Mammary epithelial cell (primary cell): ENCODE measurements at regions of chr6 and their contacts with region 1.

Region 1: GRCh38 chr6:10747251-10747972 is at the start of gene TMEM14B:
- DNase-seq: peak; percentile 95
- H3K4me3 ChIP-seq: peak within 1 kb of the TSS; percentile 82 to 99 (median 84)
- H3K27ac ChIP-seq: peak within 1 kb of the TSS; percentile 86
- H3K4me1 ChIP-seq: peaks cover 14% of the 10 kb centered on the region
- H3K27me3 ChIP-seq: no peaks in the 10 kb centered on the region
- CTCF ChIP-seq: no peak
- total RNA-seq, gene TMEM14B: 39.3 to 63.5 TPM

Region 2: DNA sequence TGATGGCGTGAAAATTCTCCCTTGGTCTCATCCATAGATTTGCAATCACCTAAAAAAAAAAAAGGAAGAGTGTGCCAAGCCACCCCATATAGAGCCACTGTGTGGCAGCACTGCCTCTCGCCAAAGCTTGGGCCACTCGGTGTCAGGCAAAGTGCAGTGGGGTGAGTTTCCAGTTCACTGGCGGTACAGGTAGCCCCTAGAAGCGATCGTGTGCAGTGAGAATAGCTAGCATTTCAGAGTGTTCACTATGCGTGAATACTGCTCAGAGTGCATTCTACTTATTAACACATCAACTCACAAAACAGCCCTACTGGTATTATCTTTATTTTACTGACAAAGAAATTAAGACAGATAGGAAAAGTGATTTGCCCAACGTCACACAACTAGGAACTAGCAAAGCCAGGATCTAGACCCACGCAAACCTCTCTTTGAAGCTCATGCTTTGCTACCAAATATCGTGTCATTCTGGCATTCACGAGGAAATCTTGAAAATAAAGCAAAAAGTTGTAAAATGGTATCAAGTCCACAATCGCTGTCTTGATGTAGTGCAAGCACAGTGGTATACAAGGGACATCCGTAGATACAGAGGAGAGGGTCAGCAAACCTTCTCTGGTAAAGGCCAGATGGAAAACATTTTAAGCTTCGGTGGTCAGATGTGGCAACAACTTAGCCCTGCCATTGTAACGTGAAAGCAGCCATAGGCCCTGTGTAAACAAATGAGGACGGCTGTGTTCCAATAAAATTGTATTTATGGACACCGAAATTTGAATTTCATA is 236.6 kb before region 1 on chr6:
- CTCF ChIA-PET with region 1: no interaction called
- dilution Hi-C with region 1: no loop called
- in situ Hi-C with region 1: no loop called
- intact Hi-C with region 1: loop called (anchors 1 kb)
- DNase-seq: peak; percentile 27
- H3K4me3 ChIP-seq: no peak overlapping the region
- H3K27ac ChIP-seq: no peak overlapping the region
- H3K4me1 ChIP-seq: no peaks in the 10 kb centered on the region
- H3K27me3 ChIP-seq: no peaks in the 10 kb centered on the region
- CTCF ChIP-seq: peak; percentile 84 to 86

Region 3: GRCh38 chr6:10759312-10759839 is 12.0 kb after region 1 on chr6:
- CTCF ChIA-PET with region 1: no interaction called
- dilution Hi-C with region 1: no loop called
- in situ Hi-C with region 1: no loop called
- intact Hi-C with region 1: loop called (anchors 1 kb)
- DNase-seq: peak; percentile 96
- H3K4me3 ChIP-seq: no peak overlapping the region
- H3K27ac ChIP-seq: peak overlapping the region; percentile 84
- H3K4me1 ChIP-seq: peaks cover 21% of the 10 kb centered on the region
- H3K27me3 ChIP-seq: no peaks in the 10 kb centered on the region
- CTCF ChIP-seq: peak; percentile 58 to 67

Region 4: DNA sequence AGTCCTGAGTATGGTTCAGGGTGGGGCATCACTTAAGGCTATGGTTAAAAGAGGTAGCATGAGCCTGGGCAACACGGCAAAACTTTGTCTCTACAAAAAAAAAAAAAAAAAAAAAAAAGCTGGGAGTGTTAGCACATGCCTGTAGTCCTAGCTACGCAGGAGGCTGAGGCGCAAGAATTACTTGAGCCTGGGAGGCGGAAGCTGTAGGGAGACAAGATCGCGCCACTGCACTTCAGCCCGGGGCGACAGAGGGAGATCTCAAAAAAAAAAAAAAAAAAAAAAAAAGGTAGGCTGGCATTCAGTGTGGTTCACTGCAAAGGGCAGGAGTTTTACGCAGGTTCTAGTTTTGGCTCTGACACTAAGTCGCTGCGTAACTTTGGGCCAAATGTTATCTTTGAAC is 281.6 kb after region 1 on chr6:
- CTCF ChIA-PET with region 1: interaction called, 10 read pairs
- dilution Hi-C with region 1: no loop called
- in situ Hi-C with region 1: no loop called
- intact Hi-C with region 1: no loop called
- DNase-seq: no peak
- H3K4me3 ChIP-seq: no peak overlapping the region
- H3K27ac ChIP-seq: no peak overlapping the region
- H3K4me1 ChIP-seq: no peaks in the 10 kb centered on the region
- H3K27me3 ChIP-seq: peaks cover 3% of the 10 kb centered on the region
- CTCF ChIP-seq: no peak

Region 5: DNA sequence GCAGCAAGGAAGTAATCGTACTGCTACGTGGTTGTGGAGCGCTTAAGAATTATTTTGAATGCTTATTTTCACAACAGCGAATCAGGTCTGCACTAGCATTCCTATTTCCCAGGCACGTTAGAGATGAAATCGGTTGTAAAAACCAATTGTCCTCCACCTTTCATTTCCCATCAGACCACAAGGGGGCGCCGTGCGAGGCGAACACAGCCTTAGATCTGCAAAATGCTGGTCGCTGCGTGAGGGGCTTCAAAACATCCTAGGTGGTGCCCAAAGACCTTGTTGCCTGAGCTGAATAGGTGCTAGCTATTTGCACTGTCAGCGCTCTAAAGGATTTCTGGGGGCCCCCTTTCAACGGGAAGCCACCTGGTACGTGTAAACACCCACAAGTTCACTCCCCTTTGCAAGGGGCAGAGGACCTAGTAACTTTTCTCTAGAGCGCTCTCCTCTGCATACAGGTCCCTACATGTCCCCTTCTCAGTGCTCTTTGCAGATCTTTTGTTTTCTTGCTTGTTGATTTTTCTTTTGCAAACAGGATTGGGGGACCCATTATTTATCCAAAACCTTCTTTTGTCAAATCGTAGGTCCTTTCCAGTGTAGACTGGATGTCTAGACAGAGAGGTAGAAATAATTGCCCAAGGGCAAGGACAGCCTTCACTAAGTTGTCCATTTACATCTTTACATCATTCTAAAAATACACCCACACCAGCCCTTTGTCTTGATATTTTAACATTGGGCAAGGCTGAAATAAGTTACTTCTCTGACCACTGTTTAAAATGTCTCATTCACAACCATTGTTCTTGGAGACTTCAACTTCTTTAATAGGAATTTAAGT is 425.3 kb after region 1 on chr6:
- CTCF ChIA-PET with region 1: no interaction called
- dilution Hi-C with region 1: no loop called
- in situ Hi-C with region 1: no loop called
- intact Hi-C with region 1: no loop called
- DNase-seq: peak; percentile 32
- H3K4me3 ChIP-seq: no peak overlapping the region
- H3K27ac ChIP-seq: no peak overlapping the region
- H3K4me1 ChIP-seq: peaks cover 8% of the 10 kb centered on the region
- H3K27me3 ChIP-seq: no peaks in the 10 kb centered on the region
- CTCF ChIP-seq: peak; percentile 72 to 84